Lower lobe of right lung (tissue), 2 donors: ENCODE measurements at regions of chr17 and their contacts with region 1.

Region 1: DNA sequence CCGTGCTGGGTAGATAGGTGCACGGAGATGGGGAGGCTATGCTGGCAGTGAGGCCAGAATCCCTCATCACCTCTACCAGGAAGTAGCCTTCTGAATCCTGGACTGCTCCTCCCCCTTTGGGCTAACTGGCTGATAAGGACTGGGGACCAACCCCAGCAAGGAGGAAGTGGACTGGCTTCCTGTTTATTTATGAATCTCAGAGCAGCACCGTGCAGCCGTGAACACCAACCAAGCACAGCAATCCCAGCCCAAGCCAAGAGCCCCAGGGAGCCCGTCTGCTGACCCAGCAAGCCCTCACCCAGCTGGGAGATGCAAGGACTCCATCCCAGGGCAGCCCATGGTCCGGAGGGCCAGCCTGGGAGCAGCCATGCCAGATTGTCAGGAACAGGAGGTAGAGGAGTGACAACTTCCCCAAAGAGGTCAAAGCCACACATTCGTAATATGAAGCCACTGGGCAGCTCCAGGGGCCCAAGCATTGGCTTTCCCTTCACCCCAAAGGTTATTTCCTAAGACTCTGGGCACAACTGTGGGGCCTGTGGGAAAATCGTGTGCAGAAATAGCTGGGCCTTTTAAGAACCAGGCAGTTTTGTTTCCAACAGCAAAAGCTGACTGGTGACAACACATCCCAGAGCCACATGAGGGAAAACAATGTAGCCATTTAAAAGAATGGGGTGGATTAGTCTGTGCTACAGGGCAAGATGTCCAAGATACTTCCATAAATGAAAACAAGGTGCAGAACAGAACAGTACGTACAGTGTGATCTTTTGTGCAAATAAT is 23.9 kb downstream of the PHB1 start:
- DNase-seq: peak; percentile 57
- ATAC-seq: peak; percentile 66 to 74
- H3K4me3 ChIP-seq: peak overlapping the region; percentile 27
- H3K27ac ChIP-seq: peak overlapping the region; percentile 86
- H3K4me1 ChIP-seq: peaks cover 52% of the 10 kb centered on the region
- H3K27me3 ChIP-seq: no peaks in the 10 kb centered on the region
- CTCF ChIP-seq: no peak

Region 2: GRCh38 chr17:49315551-49316257 is 75.0 kb before region 1 on chr17:
- intact Hi-C with region 1: loop called (anchors 10 kb)
- DNase-seq: peak; percentile 57
- ATAC-seq: peak; percentile 97 to 99
- H3K4me3 ChIP-seq: no peak overlapping the region
- H3K27ac ChIP-seq: no peak overlapping the region
- H3K4me1 ChIP-seq: peaks cover 16% of the 10 kb centered on the region
- H3K27me3 ChIP-seq: no peaks in the 10 kb centered on the region
- CTCF ChIP-seq: peak; percentile 80

Region 3: GRCh38 chr17:49482144-49482817 is 91.5 kb after region 1 on chr17:
- intact Hi-C with region 1: no loop called
- DNase-seq: no peak
- ATAC-seq: no peak
- H3K4me3 ChIP-seq: no peak overlapping the region
- H3K27ac ChIP-seq: no peak overlapping the region
- H3K4me1 ChIP-seq: peaks cover 6% of the 10 kb centered on the region
- H3K27me3 ChIP-seq: peaks cover 64% of the 10 kb centered on the region
- CTCF ChIP-seq: no peak